SK-N-SH (cell line): ENCODE measurements at regions of chr15 and their contacts with region 1.

Region 1: DNA sequence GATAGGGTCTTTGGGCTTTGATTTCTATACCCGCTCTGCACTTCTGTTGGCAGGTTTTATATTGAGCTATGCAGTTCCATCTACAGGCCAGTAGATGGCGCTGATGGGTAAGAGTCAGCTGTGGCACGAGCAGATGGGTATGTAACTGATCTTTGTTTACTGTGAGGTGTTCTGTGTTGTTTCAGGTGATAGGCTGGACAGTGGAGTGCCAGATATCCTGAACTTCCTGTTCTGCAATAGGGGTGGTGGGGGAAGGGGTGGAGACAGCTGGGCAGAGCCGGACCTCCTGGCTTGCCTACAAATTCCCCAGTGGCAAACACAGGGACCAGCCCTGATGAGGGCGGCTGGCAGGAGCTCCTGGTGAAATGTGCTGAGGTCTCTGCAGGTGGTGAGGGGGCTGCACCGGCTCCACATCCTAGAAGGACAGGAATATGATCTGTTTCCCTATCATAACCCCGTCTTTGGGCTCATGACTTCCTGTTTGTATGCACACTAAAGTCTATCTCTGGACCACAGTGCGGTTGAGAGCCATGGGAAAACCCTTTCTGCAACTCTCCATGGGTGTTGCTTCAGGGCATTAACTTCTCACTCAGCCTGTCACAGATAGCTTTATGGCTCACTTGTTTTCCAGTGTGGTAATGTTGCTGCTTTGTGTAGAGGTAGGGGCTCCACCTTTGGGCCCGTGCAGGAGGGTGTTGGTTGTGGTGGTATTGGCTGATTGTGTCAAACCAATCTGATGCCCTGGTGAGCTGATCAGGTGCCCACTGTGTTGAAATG is 13.4 kb upstream of the FAM98B start:
- DNase-seq: peak; percentile 58
- H3K4me3 ChIP-seq: no peak overlapping the region; a peak in 1 of 4 replicates
- H3K27ac ChIP-seq: no peak overlapping the region; a peak in 1 of 4 replicates
- H3K4me1 ChIP-seq: peaks cover 0 to 7% of the 10 kb centered on the region in 2 experiments; a peak in 1 of 4 replicates
- H3K27me3 ChIP-seq: 0 out of 2 replicates have a peak, but pooled peaks cover 9% of the 10 kb centered on the region
- CTCF ChIP-seq: peak; percentile 94
- EP300 ChIP-seq: no peak
- RAD21 ChIP-seq: peak; percentile 88

Region 2: DNA sequence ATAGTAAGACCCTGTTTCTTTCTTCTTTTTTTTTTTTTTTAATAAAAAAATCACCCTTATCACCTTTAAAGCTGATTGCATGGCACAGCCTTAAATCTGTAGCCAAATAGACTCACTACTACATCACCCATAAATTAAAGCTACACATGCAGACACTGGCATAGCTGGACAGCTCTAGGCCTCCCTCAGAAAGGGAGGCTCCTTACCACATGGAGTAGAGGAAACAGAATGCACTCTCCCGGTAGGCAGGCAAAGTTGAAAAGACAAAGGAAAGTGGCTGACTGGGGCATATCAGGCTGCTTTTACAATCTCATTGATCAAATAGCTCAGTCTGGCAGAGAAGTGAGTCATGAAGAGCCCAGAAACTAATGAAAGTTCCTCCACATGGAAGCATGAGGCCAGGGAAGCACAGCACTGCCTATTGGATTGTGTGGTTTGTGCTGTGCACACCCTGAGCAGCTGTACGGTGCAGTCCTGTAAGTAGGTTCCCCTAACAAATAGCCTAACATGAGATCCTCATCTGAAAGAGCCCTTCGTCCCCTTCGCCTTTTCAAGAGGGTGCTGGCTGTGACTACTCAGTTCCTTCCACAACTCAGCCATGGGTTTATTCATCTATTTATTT is 19.4 kb before region 1 on chr15:
- CTCF ChIA-PET with region 1: interaction called, 31 read pairs
- POLR2A ChIA-PET with region 1: no interaction called
- DNase-seq: no peak
- H3K4me3 ChIP-seq: no peak overlapping the region
- H3K27ac ChIP-seq: no peak overlapping the region
- H3K4me1 ChIP-seq: no peaks in the 10 kb centered on the region
- H3K27me3 ChIP-seq: peaks cover 6% of the 10 kb centered on the region; the same call in 1 of the 2 replicates
- CTCF ChIP-seq: no peak
- EP300 ChIP-seq: no peak
- RAD21 ChIP-seq: no peak

Region 3: GRCh38 chr15:38453971-38454695 is 13.6 kb after region 1 on chr15 and contains the start of gene FAM98B:
- CTCF ChIA-PET with region 1: interaction called, 46 read pairs
- POLR2A ChIA-PET with region 1: interaction called, 15 read pairs
- DNase-seq: peak; percentile 85
- H3K4me3 ChIP-seq: peak within 1 kb of the TSS; percentile 78 to 95
- H3K27ac ChIP-seq: peak within 1 kb of the TSS; percentile 79 to 97
- H3K4me1 ChIP-seq: peaks cover 0 to 8% of the 10 kb centered on the region in 2 experiments; a peak in 2 of 4 replicates
- H3K27me3 ChIP-seq: no peaks in the 10 kb centered on the region
- CTCF ChIP-seq: no peak; the same call in 1 of the 2 replicates
- EP300 ChIP-seq: peak in 1 of 2 experiments; percentile 13; a peak in 1 of 4 replicates
- RAD21 ChIP-seq: no peak
- polyA plus RNA-seq, gene FAM98B: 5.7 and 7.8 TPM in 2 replicates

Region 4: GRCh38 chr15:38474155-38474757 is 33.7 kb after region 1 on chr15:
- CTCF ChIA-PET with region 1: interaction called, 11 read pairs
- POLR2A ChIA-PET with region 1: no interaction called
- DNase-seq: peak; percentile 62
- H3K4me3 ChIP-seq: no peak overlapping the region
- H3K27ac ChIP-seq: no peak overlapping the region
- H3K4me1 ChIP-seq: no peaks in the 10 kb centered on the region; a peak in 2 of 4 replicates
- H3K27me3 ChIP-seq: no peaks in the 10 kb centered on the region
- CTCF ChIP-seq: peak; percentile 81
- EP300 ChIP-seq: no peak
- RAD21 ChIP-seq: peak; percentile 97

Region 5: GRCh38 chr15:38683382-38684242 is 243.1 kb after region 1 on chr15:
- CTCF ChIA-PET with region 1: interaction called, 101 read pairs
- POLR2A ChIA-PET with region 1: interaction called, 3 read pairs
- DNase-seq: peak; percentile 43
- H3K4me3 ChIP-seq: no peak overlapping the region; a peak in 1 of 4 replicates
- H3K27ac ChIP-seq: no peak overlapping the region
- H3K4me1 ChIP-seq: peaks cover 0 to 12% of the 10 kb centered on the region in 2 experiments; a peak in 2 of 4 replicates
- H3K27me3 ChIP-seq: no peaks in the 10 kb centered on the region
- CTCF ChIP-seq: peak; percentile 85
- EP300 ChIP-seq: no peak
- RAD21 ChIP-seq: peak; percentile 92

Region 6: GRCh38 chr15:38699633-38700230 is 259.2 kb after region 1 on chr15:
- CTCF ChIA-PET with region 1: interaction called, 66 read pairs
- POLR2A ChIA-PET with region 1: no interaction called
- DNase-seq: peak; percentile 39
- H3K4me3 ChIP-seq: peak overlapping the region in 1 of 2 experiments; percentile 5; a peak in 1 of 4 replicates
- H3K27ac ChIP-seq: no peak overlapping the region
- H3K4me1 ChIP-seq: peaks cover 0 to 38% of the 10 kb centered on the region in 2 experiments; a peak in 2 of 4 replicates
- H3K27me3 ChIP-seq: no peaks in the 10 kb centered on the region
- CTCF ChIP-seq: peak; percentile 91
- EP300 ChIP-seq: no peak
- RAD21 ChIP-seq: peak; percentile 66